Mammary epithelial cell (primary cell): ENCODE measurements at regions of chr3 and their contacts with region 1.

Region 1: DNA sequence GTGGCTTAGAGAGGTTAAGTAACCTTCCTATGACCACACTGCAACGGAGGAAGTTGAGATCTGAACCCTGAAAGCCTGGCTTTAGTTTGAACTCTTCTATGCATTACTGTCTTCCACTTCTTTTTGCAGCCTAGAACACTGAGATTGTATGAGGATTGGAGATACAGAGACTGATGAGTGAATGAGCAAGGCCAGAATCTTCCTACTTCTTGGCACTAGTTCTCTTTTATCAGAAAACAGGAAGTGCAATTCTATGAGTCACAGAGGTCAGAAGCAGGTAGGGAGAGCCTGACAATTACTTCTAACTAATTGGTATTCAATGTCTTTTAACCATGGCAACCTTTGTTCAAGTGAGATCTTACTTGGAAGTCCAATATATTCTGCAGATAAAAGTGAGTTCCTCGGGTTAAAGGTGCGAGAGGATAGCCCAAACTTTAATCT is 219.0 kb downstream of the SHQ1 start:
- DNase-seq: peak; percentile 72
- H3K4me3 ChIP-seq: no peak overlapping the region
- H3K27ac ChIP-seq: peak overlapping the region; percentile 5
- H3K4me1 ChIP-seq: peaks cover 51% of the 10 kb centered on the region
- H3K27me3 ChIP-seq: no peaks in the 10 kb centered on the region
- CTCF ChIP-seq: no peak

Region 2: DNA sequence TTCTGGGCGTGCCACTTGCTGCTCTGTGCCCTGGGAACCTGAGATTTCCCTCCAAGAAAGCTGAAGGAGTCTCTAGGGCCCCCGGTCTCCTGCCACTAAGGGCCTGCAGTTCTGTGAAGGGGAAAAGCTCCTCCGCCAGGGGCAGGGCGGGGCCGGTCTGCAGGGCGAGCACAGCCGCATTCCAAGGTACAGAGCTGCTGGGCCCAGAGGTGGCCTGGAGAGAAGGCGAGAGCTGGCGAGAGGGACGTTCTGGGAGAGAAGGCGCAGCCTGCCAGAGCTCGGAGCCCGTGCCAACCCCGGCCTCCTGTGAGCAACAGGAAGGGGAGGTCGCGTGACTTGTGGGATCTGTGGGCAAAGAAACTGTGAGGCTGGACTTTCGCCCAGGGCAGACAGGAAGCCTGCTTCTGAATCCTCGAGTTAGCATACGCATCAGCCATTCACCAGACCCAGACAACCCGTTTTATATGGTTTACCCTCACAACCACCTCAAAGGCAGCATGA is 281.3 kb before region 1 on chr3:
- CTCF ChIA-PET with region 1: no interaction called
- dilution Hi-C with region 1: no loop called
- in situ Hi-C with region 1: no loop called
- intact Hi-C with region 1: loop called (anchors 5 kb)
- DNase-seq: peak; percentile 94
- H3K4me3 ChIP-seq: no peak overlapping the region
- H3K27ac ChIP-seq: no peak overlapping the region
- H3K4me1 ChIP-seq: peaks cover 55% of the 10 kb centered on the region
- H3K27me3 ChIP-seq: peaks cover 3% of the 10 kb centered on the region
- CTCF ChIP-seq: peak; percentile 2 to 38

Region 3: DNA sequence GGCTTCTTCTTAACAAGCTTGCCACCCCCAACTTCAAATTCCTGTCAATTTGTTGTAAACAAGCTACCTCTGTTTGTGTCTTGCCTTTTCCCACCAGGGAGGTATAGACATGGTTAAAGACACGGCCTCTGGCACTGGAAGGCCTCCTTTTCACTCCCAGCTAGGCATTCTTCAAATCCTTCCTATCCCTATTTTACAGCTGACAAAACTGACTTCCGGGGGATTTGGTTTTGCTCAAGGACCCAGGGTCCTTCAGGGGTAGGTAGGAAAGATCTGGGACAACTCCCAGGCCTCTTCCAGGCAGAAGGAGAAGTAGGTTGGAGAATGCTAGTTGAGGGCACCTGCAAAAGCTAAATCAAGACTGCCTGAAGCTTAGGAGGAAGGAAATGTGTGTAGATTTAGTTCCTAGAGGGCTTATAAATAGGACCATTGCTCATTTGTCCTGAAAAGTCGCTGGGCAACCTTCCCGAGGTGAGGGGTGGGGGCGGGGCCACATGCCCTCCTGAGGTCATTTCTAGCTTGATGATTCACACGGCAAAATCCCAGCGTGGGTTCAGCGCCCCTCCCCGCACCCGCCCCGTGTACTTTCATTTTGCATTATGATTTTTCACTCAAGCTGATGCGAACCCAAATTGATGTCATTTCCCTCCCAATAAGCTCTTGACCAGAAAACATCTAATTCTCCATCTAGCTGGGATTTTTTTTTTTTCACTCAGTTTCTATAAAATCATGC is 146.5 kb before region 1 on chr3:
- CTCF ChIA-PET with region 1: no interaction called
- dilution Hi-C with region 1: no loop called
- in situ Hi-C with region 1: no loop called
- intact Hi-C with region 1: loop called (anchors 5 kb)
- DNase-seq: peak; percentile 76
- H3K4me3 ChIP-seq: peak overlapping the region; percentile 23 to 32 (median 29)
- H3K27ac ChIP-seq: peak overlapping the region; percentile 42
- H3K4me1 ChIP-seq: peaks cover 21% of the 10 kb centered on the region
- H3K27me3 ChIP-seq: no peaks in the 10 kb centered on the region
- CTCF ChIP-seq: no peak

Region 4: DNA sequence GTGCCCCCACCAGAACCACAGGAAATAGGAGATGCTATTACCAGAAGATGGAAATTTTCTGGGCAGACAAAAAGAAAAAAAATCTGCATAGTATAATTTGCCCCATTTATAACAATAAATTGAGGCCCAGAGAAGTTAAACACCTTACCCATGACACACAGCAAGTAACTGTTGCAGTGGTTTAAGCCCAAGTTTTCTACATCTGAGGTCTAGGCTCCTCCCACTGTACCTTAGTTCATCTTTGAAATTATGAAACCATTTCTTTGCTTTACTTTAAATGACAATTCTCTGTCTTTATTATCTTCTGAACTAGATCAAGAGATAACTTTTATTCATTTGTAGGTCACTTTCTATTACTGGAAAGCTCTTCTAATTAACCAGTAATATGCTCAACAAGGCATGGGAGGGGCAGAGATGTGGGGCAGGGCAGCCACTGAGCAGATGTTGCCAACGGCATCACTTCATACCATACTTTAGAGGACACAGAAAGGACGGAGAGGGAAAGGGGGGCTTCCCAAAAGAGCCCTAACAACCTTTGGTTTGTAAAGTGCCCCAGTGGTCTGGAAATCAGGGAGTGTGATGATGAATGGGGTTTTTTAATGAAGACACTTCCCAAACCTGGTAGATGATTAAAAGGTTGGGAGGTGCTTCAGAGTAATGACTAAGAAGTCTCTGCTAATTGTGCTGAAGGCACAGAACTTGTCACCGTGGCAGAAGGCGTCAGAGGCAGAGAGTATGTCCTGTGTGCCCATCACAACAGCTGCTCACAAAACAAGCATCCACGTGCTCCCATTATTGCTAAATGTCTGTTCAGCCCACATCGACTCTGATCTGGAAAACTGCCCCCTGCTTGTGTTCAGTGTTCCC is 123.4 kb before region 1 on chr3:
- CTCF ChIA-PET with region 1: no interaction called
- dilution Hi-C with region 1: no loop called
- in situ Hi-C with region 1: no loop called
- intact Hi-C with region 1: no loop called
- DNase-seq: no peak
- H3K4me3 ChIP-seq: no peak overlapping the region
- H3K27ac ChIP-seq: no peak overlapping the region
- H3K4me1 ChIP-seq: no peaks in the 10 kb centered on the region
- H3K27me3 ChIP-seq: peaks cover 3% of the 10 kb centered on the region
- CTCF ChIP-seq: no peak

Region 5: DNA sequence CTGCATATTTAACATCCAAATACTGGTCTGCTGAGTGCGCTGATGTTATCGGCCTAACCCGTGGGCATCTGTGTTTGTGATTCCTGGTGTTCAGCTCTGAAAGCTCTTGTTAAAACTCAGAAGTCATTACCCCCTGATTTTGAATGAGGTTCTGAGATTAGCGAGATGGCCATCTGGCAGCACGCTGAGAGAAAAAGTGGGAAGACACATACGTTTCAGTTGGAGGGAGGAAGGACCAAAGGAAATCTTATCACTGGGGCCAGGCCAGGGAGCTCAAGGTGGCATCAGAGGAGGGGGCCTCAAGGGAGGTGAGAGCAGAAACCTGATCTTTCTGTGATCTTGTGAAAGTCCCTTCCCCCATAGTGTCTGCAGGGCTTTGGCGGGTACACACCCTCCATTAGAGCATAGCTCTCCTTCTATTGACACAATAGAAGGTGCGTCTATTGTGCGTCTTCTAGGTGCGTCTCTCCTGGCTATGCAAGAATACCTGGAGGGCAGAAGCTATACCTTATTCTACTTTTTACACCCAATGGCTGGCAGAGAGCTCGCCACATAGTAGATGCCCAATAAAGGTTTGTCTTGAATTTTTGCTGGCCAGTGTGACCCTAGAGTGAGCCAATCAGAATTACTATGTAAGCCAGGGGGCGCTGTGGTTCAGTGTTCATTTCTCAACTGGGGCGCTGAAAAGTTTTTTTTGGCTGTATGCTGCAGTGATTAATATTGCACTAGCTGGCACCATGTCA is 36.7 kb after region 1 on chr3:
- CTCF ChIA-PET with region 1: no interaction called
- dilution Hi-C with region 1: no loop called
- in situ Hi-C with region 1: no loop called
- intact Hi-C with region 1: loop called (anchors 2 kb)
- DNase-seq: peak; percentile 21
- H3K4me3 ChIP-seq: no peak overlapping the region
- H3K27ac ChIP-seq: no peak overlapping the region
- H3K4me1 ChIP-seq: peaks cover 6% of the 10 kb centered on the region
- H3K27me3 ChIP-seq: no peaks in the 10 kb centered on the region
- CTCF ChIP-seq: peak; percentile 61 to 65